Activated CD4-positive, alpha-beta T cell treated with anti-CD3 and anti-CD28 coated beads for 36 hours (primary cell): ENCODE measurements at regions of chr22 and their contacts with region 1.

Region 1: GRCh38 chr22:28855355-28856094 is 27.8 kb upstream of the ZNRF3 start:
- DNase-seq: peak; percentile 52
- ATAC-seq: peak; percentile 36
- H3K4me3 Mint-ChIP-seq: no peak overlapping the region
- H3K27ac Mint-ChIP-seq: no peak overlapping the region
- H3K4me1 Mint-ChIP-seq: no peaks in the 10 kb centered on the region
- H3K27me3 Mint-ChIP-seq: peaks cover 6% of the 10 kb centered on the region

Region 2: GRCh38 chr22:28935713-28936112 is 80.2 kb after region 1 on chr22:
- CTCF ChIA-PET with region 1: no interaction called
- POLR2A ChIA-PET with region 1: no interaction called
- intact Hi-C with region 1: loop called in 1 of 2 experiments (anchors 5 kb)
- DNase-seq: peak; percentile 17
- ATAC-seq: no peak
- H3K4me3 Mint-ChIP-seq: no peak overlapping the region
- H3K27ac Mint-ChIP-seq: no peak overlapping the region
- H3K4me1 Mint-ChIP-seq: no peaks in the 10 kb centered on the region
- H3K27me3 Mint-ChIP-seq: peaks cover 35% of the 10 kb centered on the region

Region 3: DNA sequence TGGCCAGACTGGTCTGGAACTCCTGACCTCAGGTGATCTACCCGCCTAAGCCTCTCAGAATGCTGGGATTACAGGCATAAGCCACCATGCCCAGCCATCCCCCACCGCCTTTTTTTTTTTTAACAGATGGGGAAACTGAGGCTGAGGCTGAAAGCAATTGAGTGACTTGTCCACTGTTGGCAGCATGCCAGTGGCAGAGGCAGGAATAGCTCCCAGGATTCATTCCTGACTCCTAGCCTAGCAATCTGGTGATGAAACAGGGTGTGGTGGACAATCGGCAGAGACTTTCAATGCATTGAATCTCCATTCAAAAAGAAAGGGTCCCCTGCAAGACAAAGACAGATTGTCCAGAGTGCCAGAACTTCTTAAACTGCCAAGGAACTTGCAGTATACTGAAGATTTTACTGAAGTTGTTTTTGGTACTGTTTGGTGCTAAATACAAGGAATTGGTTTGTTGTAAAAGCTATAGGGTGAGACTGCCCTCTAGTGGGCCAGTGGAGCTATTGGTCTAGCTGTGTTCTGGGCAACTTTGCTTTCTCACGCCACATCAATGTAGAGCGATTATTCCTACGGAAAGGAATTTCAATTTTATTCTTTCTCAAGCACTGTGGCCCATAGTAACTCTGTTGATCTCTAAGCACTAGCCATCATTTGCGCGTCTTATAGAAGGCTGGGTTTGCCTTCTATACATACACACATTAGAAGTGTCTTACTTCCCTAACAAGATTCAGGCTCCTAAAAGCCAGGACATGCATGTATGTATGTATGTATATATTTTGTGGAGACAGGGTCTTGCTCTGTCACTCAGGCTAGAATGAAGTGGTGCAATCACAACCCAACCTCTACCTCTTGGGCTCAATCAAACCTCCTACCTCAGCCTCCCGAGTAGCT is 185.1 kb after region 1 on chr22:
- CTCF ChIA-PET with region 1: interaction called, 72 read pairs
- POLR2A ChIA-PET with region 1: no interaction called
- intact Hi-C with region 1: loop called (anchors 1 kb)
- DNase-seq: peak; percentile 77
- ATAC-seq: peak; percentile 65
- H3K4me3 Mint-ChIP-seq: no peak overlapping the region
- H3K27ac Mint-ChIP-seq: no peak overlapping the region
- H3K4me1 Mint-ChIP-seq: no peaks in the 10 kb centered on the region
- H3K27me3 Mint-ChIP-seq: peaks cover 7% of the 10 kb centered on the region

Region 4: GRCh38 chr22:29154364-29155048 is 299.0 kb after region 1 on chr22:
- CTCF ChIA-PET with region 1: no interaction called
- POLR2A ChIA-PET with region 1: no interaction called
- intact Hi-C with region 1: loop called in 1 of 2 experiments (anchors 2 kb)
- DNase-seq: peak; percentile 88
- ATAC-seq: peak; percentile 86
- H3K4me3 Mint-ChIP-seq: no peak overlapping the region
- H3K27ac Mint-ChIP-seq: no peak overlapping the region
- H3K4me1 Mint-ChIP-seq: peaks cover 6% of the 10 kb centered on the region
- H3K27me3 Mint-ChIP-seq: peaks cover 18% of the 10 kb centered on the region